Heart right ventricle (tissue), 16 donors: ENCODE measurements at regions of chr3 and their contacts with region 1.

Region 1: GRCh38 chr3:173887888-173888287 is 490.3 kb downstream of the NLGN1 start:
- DNase-seq: no peak
- ATAC-seq: no peak
- H3K4me3 ChIP-seq: no peak overlapping the region
- H3K27ac ChIP-seq: no peak overlapping the region
- H3K4me1 ChIP-seq: no peaks in the 10 kb centered on the region
- H3K27me3 ChIP-seq: no peaks in the 10 kb centered on the region
- CTCF ChIP-seq: no peak

Region 2: GRCh38 chr3:173799060-173799816 is 88.7 kb before region 1 on chr3:
- intact Hi-C with region 1: no loop called
- DNase-seq: no peak
- ATAC-seq: no peak
- H3K4me3 ChIP-seq: no peak overlapping the region
- H3K27ac ChIP-seq: no peak overlapping the region
- H3K4me1 ChIP-seq: no peaks in the 10 kb centered on the region
- H3K27me3 ChIP-seq: no peaks in the 10 kb centered on the region
- CTCF ChIP-seq: no peak

Region 3: DNA sequence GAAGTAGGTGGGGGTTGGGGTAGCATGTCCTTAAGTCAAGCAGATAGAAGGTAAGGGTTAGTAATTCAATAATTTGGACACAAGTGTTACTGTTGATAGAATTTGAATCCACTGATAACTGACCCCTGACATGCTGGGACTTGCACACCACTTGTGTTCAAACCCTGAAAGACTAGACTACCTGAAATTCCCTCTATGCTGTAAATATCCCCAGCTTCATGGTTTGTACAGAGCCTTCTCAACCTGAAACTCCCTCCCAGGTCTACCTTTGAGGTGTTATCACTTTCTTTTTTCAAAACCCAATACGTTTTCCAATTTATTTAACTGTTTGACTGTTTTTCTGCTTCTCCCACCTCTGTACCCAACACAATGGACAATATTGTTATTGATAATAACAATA is 30.7 kb before region 1 on chr3:
- intact Hi-C with region 1: loop called in 1 of 10 experiments (anchors 2 kb)
- DNase-seq: no peak
- ATAC-seq: no peak
- H3K4me3 ChIP-seq: no peak overlapping the region
- H3K27ac ChIP-seq: no peak overlapping the region
- H3K4me1 ChIP-seq: no peaks in the 10 kb centered on the region
- H3K27me3 ChIP-seq: no peaks in the 10 kb centered on the region
- CTCF ChIP-seq: no peak

Region 4: DNA sequence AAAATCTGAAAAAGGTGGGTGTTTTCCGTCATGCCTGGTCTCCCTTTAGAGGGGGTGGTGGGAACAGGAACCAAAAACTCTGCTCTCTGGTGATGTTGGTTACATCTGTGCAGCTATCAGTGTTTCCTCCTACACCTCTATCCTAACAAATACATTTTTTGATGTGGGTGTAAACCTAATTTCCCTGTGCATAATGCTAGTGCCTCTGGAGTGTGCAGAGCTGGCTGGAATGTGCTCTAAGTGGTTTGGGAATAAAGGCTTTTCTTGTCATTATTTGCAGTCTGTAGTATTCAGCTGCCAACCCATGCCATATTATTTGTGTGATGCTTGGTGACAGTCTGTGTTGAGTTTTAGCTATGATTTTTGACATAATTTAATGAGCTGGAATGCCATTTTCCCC is 57.3 kb after region 1 on chr3:
- intact Hi-C with region 1: no loop called
- DNase-seq: no peak
- ATAC-seq: no peak
- H3K4me3 ChIP-seq: no peak overlapping the region
- H3K27ac ChIP-seq: no peak overlapping the region
- H3K4me1 ChIP-seq: no peaks in the 10 kb centered on the region
- H3K27me3 ChIP-seq: no peaks in the 10 kb centered on the region
- CTCF ChIP-seq: no peak